Sigmoid colon (tissue), 7 donors: ENCODE measurements at regions of chr4 and their contacts with region 1.

Region 1: GRCh38 chr4:67545199-67546003 is at the start of gene CENPC:
- DNase-seq: peak; percentile 99
- H3K4me3 ChIP-seq: peak within 1 kb of the TSS; percentile 63 to 83 (median 80)
- H3K27ac ChIP-seq: peak within 1 kb of the TSS; percentile 89 to 93 (median 92)
- H3K4me1 ChIP-seq: peaks cover 0 to 40% (median 20%) of the 10 kb centered on the region in 4 donors
- H3K27me3 ChIP-seq: no peaks in the 10 kb centered on the region
- CTCF ChIP-seq: no peak
- EP300 ChIP-seq: no peak
- POLR2A ChIP-seq: peak; percentile 56 to 73
- total RNA-seq, gene CENPC: 20.6 to 30.0 (median 25.9) TPM

Region 2: DNA sequence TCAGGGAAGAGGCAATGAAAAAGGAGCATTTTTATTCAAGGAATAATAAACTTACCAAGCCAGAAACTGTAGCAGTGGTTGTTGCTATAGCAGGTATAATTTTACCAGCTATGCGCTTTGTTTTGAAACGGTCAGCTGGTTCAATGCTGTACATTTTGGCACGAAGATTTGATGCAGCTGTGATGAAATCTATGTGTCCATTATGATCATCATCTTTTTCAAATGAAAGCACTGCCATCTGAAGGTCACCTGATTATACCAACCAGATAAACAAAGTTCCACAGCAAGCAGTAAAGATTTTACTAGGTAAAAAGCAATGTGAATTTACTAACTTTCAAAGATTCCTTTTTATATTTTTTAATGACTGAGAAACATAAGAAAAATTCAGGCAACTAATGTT is 79.5 kb after region 1 on chr4:
- intact Hi-C with region 1: loop called (anchors 5 kb)
- DNase-seq: no peak
- H3K4me3 ChIP-seq: no peak overlapping the region
- H3K27ac ChIP-seq: no peak overlapping the region
- H3K4me1 ChIP-seq: no peaks in the 10 kb centered on the region
- H3K27me3 ChIP-seq: no peaks in the 10 kb centered on the region
- CTCF ChIP-seq: no peak
- EP300 ChIP-seq: no peak
- POLR2A ChIP-seq: no peak

Region 3: GRCh38 chr4:67700738-67701516 is 155.5 kb after region 1 on chr4 and contains the start of gene UBA6:
- intact Hi-C with region 1: loop called (anchors 2 kb)
- DNase-seq: peak; percentile 98
- H3K4me3 ChIP-seq: peak within 1 kb of the TSS; percentile 48 to 92 (median 80)
- H3K27ac ChIP-seq: peak within 1 kb of the TSS; percentile 82 to 91 (median 86)
- H3K4me1 ChIP-seq: peaks cover 0 to 23% (median 14%) of the 10 kb centered on the region in 4 donors
- H3K27me3 ChIP-seq: no peaks in the 10 kb centered on the region
- CTCF ChIP-seq: peak in 1 of 4 experiments; percentile 30
- EP300 ChIP-seq: peak in 1 of 4 donors; percentile 10
- POLR2A ChIP-seq: peak in 1 of 2 donors; percentile 27
- total RNA-seq, gene UBA6: 22.8 to 85.0 (median 28.5) TPM

Region 4: GRCh38 chr4:68342134-68342533 is 796.7 kb after region 1 on chr4:
- intact Hi-C with region 1: no loop called
- DNase-seq: no peak
- H3K4me3 ChIP-seq: no peak overlapping the region
- H3K27ac ChIP-seq: no peak overlapping the region
- H3K4me1 ChIP-seq: peaks cover 0 to 90% (median 76%) of the 10 kb centered on the region in 4 donors
- H3K27me3 ChIP-seq: no peaks in the 10 kb centered on the region
- CTCF ChIP-seq: no peak
- EP300 ChIP-seq: no peak
- POLR2A ChIP-seq: no peak